Sigmoid colon (tissue), 7 donors: ENCODE measurements at regions of chrX and their contacts with region 1.

Region 1: DNA sequence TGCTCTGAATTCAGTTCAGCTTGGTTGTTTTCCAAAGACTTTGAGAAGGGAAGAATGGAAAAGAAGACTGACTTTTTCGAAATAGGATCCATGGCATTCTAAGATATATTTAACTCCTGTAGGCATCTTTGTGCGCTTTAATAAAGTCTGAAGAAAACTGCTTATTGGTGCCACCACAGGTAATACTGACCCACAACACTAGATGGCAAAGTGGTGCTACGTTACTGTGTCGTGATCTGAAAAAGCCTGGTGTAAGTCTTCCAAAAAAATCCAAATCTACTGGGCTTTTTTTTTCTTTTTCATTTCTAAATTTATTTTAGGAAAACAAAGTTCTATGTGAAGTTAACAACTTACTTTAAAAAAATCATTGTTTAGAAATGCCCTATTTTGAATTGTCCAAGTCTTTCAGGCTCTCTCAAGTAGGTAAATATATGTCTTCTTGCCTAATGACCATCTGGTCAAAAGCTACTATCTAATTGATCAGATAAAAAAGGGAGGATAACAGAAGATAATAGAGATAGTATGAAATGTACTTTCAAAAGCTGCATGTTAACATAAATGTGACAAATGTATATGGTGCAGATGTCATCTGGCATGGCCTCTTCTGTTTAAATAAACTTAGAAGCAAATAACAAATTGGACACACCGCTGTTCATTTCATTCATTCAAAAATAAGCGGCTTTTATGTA is 47.0 kb upstream of the MID1IP1 start:
- DNase-seq: no peak
- H3K4me3 ChIP-seq: no peak overlapping the region
- H3K27ac ChIP-seq: no peak overlapping the region
- H3K4me1 ChIP-seq: no peaks in the 10 kb centered on the region
- H3K27me3 ChIP-seq: no peaks in the 10 kb centered on the region
- CTCF ChIP-seq: peak; percentile 34 to 54 (median 50)
- EP300 ChIP-seq: no peak
- POLR2A ChIP-seq: no peak

Region 2: DNA sequence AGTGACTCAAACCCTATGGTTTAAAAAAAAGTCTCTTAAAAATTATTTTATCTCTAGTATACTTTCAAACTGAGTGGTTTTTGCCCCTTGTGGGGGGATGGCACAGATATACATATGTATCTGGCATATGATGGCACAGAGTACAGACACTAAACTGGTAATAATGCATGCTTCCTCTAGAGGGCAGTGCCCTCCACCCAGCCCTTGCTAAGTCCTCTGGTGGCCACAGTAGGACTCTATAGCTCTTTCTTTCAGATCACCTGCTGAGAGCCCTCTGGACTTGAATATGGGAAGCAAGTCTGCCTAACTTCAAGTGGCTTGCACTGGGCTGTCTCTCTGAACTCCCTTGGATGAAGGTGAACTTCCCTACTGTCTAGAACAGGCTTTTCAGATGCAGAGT is 126.6 kb before region 1 on chrX:
- intact Hi-C with region 1: no loop called
- DNase-seq: no peak
- H3K4me3 ChIP-seq: no peak overlapping the region
- H3K27ac ChIP-seq: no peak overlapping the region
- H3K4me1 ChIP-seq: no peaks in the 10 kb centered on the region
- H3K27me3 ChIP-seq: no peaks in the 10 kb centered on the region
- CTCF ChIP-seq: no peak
- EP300 ChIP-seq: no peak
- POLR2A ChIP-seq: no peak

Region 3: DNA sequence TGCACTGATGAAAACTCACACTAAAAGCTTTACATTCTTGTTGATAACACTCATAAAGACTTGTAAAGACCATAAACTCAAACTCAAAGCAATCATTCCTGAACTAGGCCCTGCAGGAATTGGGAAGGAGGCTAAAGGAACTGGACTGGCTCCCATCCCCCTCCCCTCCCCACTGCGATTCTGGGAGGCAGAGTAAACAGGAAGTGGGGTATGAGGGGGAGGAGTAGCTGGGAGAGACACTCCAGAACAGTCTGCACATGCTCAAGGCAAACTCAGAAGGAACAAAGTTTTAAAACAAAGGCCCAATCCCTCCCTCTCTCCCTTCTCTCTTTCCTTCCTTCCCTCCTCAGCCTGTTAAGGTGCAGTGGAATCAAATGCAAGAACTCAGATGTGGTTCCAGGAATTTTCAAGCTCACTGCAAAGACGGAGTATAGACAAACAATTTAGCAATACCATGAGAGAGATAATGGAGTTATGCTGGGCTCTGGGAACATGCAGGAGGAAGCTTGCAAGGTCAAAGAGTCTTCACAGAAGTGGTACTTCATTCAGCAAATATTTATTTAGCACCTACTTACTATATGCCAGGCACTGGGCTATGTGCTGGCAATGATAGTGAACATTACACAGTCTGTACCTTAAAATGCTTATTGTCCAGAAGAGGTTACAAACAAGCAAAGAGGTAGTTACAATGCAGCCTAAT is 62.9 kb after region 1 on chrX:
- intact Hi-C with region 1: no loop called
- DNase-seq: peak; percentile 73
- H3K4me3 ChIP-seq: no peak overlapping the region
- H3K27ac ChIP-seq: peak overlapping the region in 3 of 4 donors; percentile 55 to 61 (median 58)
- H3K4me1 ChIP-seq: peaks cover 0 to 15% (median 6%) of the 10 kb centered on the region in 4 donors
- H3K27me3 ChIP-seq: no peaks in the 10 kb centered on the region
- CTCF ChIP-seq: no peak
- EP300 ChIP-seq: no peak
- POLR2A ChIP-seq: no peak

Region 4: DNA sequence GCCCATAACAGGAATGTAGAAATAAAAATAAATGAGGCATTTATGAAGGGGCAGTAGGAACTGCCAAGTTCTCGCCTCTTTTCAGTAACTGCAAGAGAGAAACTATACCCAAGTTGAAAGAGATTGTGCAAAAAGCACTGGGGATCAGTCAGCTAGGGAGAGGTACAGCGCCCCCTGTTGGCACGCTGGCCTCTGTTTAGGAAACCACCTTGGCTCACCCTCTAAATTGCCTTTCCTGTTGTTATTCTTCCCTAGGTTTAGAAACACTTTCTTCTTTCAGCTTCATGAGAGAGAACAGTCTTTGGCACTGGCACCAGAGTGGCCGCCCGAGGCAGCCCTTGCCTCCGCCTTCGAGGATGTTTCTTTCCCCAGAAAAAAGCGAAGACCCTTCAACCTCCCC is 395.5 kb after region 1 on chrX:
- intact Hi-C with region 1: loop called (anchors 5 kb)
- DNase-seq: peak; percentile 77
- H3K4me3 ChIP-seq: no peak overlapping the region
- H3K27ac ChIP-seq: no peak overlapping the region
- H3K4me1 ChIP-seq: no peaks in the 10 kb centered on the region
- H3K27me3 ChIP-seq: no peaks in the 10 kb centered on the region
- CTCF ChIP-seq: peak; percentile 32 to 51 (median 43)
- EP300 ChIP-seq: no peak
- POLR2A ChIP-seq: no peak